ENCODE measurements at regions of chr1 and their contacts with region 1.

Region 1: DNA sequence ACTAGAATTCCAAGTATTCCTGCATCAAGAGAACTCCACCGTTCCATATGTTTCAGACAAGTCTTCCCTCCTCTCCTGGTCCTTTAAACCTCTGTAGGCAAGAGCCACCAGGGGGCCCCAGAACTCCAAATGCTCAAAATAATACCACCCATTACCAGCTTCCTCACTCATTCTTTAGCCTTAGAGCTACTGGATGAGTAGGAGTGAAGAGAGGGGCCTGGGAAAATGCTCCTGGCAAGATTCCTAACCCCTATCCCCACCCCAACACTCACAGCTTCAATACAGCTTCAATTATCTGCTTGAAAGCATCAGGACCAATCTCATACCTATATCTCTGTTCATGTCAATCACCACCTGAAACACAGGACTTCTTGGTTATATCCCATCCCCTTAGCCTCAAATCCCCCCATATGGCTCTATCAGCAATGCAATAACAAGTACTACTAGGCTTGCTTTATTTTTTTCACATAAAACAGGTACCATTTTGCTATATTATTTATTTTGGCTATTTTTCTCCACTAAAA is 9.7 kb downstream of the TOR1AIP2 start:
- DNase-seq: no peak
- ATAC-seq: peak; percentile 93
- H3K4me3 ChIP-seq: no peak overlapping the region
- H3K27ac ChIP-seq: no peak overlapping the region
- H3K4me1 ChIP-seq: no peaks in the 10 kb centered on the region
- H3K27me3 ChIP-seq: no peaks in the 10 kb centered on the region
- CTCF ChIP-seq: peak; percentile 73 to 87 (median 84)
- POLR2A ChIP-seq: no peak
- RAD21 ChIP-seq: peak; percentile 69

Region 2: GRCh38 chr1:179968994-179969919 is 101.4 kb after region 1 on chr1:
- CTCF ChIA-PET with region 1: no interaction called
- POLR2A ChIA-PET with region 1: no interaction called
- RAD21 ChIA-PET with region 1: no interaction called
- intact Hi-C with region 1: no loop called
- DNase-seq: no peak
- ATAC-seq: no peak
- H3K4me3 ChIP-seq: no peak overlapping the region
- H3K27ac ChIP-seq: no peak overlapping the region
- H3K4me1 ChIP-seq: no peaks in the 10 kb centered on the region
- H3K27me3 ChIP-seq: no peaks in the 10 kb centered on the region
- CTCF ChIP-seq: no peak
- POLR2A ChIP-seq: no peak
- RAD21 ChIP-seq: no peak

Region 3: GRCh38 chr1:180178511-180179161 is 310.8 kb after region 1 on chr1:
- CTCF ChIA-PET with region 1: interaction called, 20 read pairs
- POLR2A ChIA-PET with region 1: no interaction called
- RAD21 ChIA-PET with region 1: no interaction called
- intact Hi-C with region 1: loop called (anchors 1 kb)
- DNase-seq: peak; percentile 3
- ATAC-seq: peak; percentile 67
- H3K4me3 ChIP-seq: no peak overlapping the region
- H3K27ac ChIP-seq: no peak overlapping the region
- H3K4me1 ChIP-seq: no peaks in the 10 kb centered on the region
- H3K27me3 ChIP-seq: no peaks in the 10 kb centered on the region
- CTCF ChIP-seq: peak; percentile 57 to 96 (median 95); a peak in 5 of 6 replicates
- POLR2A ChIP-seq: no peak
- RAD21 ChIP-seq: peak; percentile 90

Region 4: GRCh38 chr1:180470031-180470430 is 602.2 kb after region 1 on chr1:
- CTCF ChIA-PET with region 1: no interaction called
- POLR2A ChIA-PET with region 1: no interaction called
- RAD21 ChIA-PET with region 1: no interaction called
- intact Hi-C with region 1: loop called (anchors 10 kb)
- DNase-seq: no peak
- ATAC-seq: no peak
- H3K4me3 ChIP-seq: no peak overlapping the region
- H3K27ac ChIP-seq: no peak overlapping the region
- H3K4me1 ChIP-seq: no peaks in the 10 kb centered on the region
- H3K27me3 ChIP-seq: no peaks in the 10 kb centered on the region
- CTCF ChIP-seq: no peak
- POLR2A ChIP-seq: no peak
- RAD21 ChIP-seq: no peak